ENCODE measurements at regions of chr14 and their contacts with region 1.

Region 1: GRCh38 chr14:50321009-50321660 is 9.0 kb downstream of the DMAC2L start:
- DNase-seq: peak; percentile 93 to 98 (median 97)
- H3K4me3 ChIP-seq: peak overlapping the region in 5 of 7 experiments; percentile 21 to 49 (median 33)
- H3K27ac ChIP-seq: peak overlapping the region in 1 of 2 experiments; percentile 79
- H3K4me1 ChIP-seq: peaks cover 5 to 10% (median 7%) of the 10 kb centered on the region in 4 experiments
- H3K27me3 ChIP-seq: no peaks in the 10 kb centered on the region

Region 2: DNA sequence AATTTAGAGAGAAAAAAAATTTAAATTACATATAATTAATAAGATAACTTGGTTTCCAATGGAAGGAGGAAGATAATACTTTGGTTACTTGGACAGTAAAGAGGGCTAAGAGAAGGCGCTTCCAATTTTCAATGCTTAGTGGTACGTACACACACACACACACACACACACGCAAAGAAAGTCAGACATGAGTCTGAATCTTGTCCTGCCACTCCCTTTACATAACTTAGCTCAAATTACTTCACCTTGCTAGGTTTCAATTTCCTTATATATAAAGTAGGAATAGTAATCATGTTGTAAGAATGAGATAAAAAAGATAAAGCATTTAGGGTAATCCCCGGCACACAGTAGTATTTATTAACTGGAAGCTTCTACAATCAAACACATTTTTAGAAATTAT is 165.0 kb before region 1 on chr14:
- CTCF ChIA-PET with region 1: no interaction called
- POLR2A ChIA-PET with region 1: no interaction called
- DNase-seq: no peak
- H3K4me3 ChIP-seq: no peak overlapping the region
- H3K27ac ChIP-seq: no peak overlapping the region
- H3K4me1 ChIP-seq: no peaks in the 10 kb centered on the region
- H3K27me3 ChIP-seq: no peaks in the 10 kb centered on the region

Region 3: GRCh38 chr14:50335389-50335788 is 14.3 kb after region 1 on chr14:
- CTCF ChIA-PET with region 1: interaction called, 26 read pairs
- POLR2A ChIA-PET with region 1: no interaction called
- DNase-seq: peak in 1 of 3 donors; percentile 27
- H3K4me3 ChIP-seq: no peak overlapping the region
- H3K27ac ChIP-seq: peak overlapping the region in 1 of 2 experiments; percentile 75
- H3K4me1 ChIP-seq: peaks cover 13 to 24% (median 20%) of the 10 kb centered on the region in 4 experiments
- H3K27me3 ChIP-seq: no peaks in the 10 kb centered on the region

Region 4: DNA sequence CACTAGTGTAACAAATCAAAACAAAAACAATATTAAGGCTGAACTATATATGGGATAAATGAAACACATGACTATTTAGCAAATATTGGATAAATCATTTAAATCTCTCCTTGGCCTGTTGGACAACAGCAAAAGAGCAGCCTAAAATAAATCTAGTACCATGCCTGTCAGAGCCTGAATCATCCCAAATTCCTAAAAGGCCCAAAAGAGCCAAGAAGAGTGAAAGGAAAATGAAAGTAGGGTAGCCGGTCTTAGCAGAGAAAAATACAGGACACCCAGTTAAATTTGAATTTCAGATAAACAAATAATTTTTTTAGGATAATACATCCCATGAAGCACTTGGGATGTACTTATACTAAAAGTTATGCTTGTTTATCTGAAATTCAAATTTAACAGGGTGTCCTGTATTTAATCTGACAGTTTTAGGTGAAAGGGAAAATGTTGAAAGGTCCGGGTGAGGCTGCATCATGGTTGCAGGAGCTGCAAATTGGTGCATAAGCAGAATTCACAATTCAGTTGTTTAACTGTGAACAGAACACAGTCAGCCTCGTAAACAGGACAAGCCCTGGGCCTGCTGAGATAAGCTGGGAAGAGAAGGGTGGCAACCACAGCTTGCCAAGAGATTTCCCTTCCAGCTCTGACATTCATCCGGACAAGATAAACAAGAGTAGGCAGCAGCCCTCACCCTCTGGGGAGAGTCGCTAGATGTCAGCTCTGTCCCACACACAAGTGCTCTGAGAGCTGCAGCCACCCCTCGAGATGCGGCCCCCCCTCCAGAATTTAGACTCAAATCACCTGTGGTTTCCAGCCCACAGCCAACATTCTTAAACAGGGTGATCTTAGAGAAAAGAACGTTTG is 21.3 kb after region 1 on chr14:
- CTCF ChIA-PET with region 1: interaction called, 20 read pairs
- POLR2A ChIA-PET with region 1: no interaction called
- DNase-seq: peak; percentile 78 to 88 (median 79)
- H3K4me3 ChIP-seq: peak overlapping the region in 5 of 7 experiments; percentile 6 to 57 (median 51)
- H3K27ac ChIP-seq: peak overlapping the region in 1 of 2 experiments; percentile 68
- H3K4me1 ChIP-seq: peaks cover 5 to 21% (median 18%) of the 10 kb centered on the region in 4 experiments
- H3K27me3 ChIP-seq: no peaks in the 10 kb centered on the region

Region 5: DNA sequence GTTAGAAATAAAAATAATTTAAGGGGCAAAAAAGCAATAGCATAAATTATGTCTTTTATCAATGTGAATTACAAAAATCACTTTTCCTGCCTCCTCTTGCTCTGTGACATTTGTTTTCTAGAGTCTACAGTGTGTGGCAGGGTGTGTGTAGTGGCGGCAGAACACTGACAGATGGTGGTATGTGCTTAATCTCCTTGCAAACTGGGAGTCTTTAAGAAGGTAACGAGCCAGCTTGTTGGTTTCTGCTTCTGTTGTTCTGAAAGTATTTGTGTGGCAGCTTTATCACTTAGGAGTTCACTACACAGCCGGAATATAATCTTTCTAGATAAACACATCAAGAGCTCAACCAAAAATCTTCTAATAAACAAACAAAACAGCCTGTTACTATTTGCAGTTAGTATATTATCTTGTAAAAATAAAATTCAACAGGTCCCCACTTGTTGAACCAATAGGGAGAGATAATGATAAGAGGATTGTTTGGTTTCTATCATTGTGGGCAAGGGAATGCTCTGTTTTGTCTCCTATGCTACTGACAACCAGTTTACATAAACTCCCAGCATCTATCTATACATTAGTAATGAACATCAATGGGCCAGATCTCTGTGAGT is 62.6 kb after region 1 on chr14:
- CTCF ChIA-PET with region 1: no interaction called
- POLR2A ChIA-PET with region 1: no interaction called
- DNase-seq: no peak
- H3K4me3 ChIP-seq: no peak overlapping the region
- H3K27ac ChIP-seq: no peak overlapping the region
- H3K4me1 ChIP-seq: no peaks in the 10 kb centered on the region
- H3K27me3 ChIP-seq: no peaks in the 10 kb centered on the region

Region 6: GRCh38 chr14:50532502-50533240 is 211.5 kb after region 1 on chr14 and contains the start of gene MAP4K5:
- CTCF ChIA-PET with region 1: interaction called, 18 read pairs
- POLR2A ChIA-PET with region 1: no interaction called
- DNase-seq: peak; percentile 91 to 96 (median 96)
- H3K4me3 ChIP-seq: peak within 1 kb of the TSS; percentile 72 to 93 (median 87)
- H3K27ac ChIP-seq: peak within 1 kb of the TSS; percentile 46 to 83
- H3K4me1 ChIP-seq: peaks cover 24 to 52% (median 35%) of the 10 kb centered on the region in 4 experiments
- H3K27me3 ChIP-seq: no peaks in the 10 kb centered on the region